Left lung (tissue), 14 donors: ENCODE measurements at regions of chr5 and their contacts with region 1.

Region 1: DNA sequence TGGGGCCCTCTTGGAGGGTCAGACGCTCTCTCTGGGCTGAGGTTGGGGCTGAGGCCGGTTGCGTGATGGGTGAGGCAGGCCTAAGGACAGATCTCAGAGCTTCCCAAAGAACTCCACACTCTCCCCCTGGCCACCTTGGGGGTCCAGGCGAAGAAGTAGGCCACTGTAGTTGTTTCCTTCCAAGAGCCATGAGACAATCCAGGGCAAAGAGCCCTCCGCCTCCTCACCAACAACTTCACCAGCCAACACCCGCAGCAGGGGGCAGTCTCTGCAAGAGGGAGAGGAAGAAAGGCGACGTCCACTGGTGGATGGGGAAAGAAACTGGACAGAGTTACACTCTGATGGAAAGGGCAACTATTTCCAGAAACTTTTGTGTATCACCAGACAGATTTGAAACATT is 10.7 kb downstream of the SLC35A4 start:
- DNase-seq: peak in 1 of 4 donors; percentile 82
- ATAC-seq: peak; percentile 85
- H3K4me3 ChIP-seq: no peak overlapping the region
- H3K27ac ChIP-seq: no peak overlapping the region
- H3K4me1 ChIP-seq: peaks cover 0 to 36% of the 10 kb centered on the region in 2 donors
- H3K27me3 ChIP-seq: no peaks in the 10 kb centered on the region
- CTCF ChIP-seq: peak; percentile 38 to 67

Region 2: DNA sequence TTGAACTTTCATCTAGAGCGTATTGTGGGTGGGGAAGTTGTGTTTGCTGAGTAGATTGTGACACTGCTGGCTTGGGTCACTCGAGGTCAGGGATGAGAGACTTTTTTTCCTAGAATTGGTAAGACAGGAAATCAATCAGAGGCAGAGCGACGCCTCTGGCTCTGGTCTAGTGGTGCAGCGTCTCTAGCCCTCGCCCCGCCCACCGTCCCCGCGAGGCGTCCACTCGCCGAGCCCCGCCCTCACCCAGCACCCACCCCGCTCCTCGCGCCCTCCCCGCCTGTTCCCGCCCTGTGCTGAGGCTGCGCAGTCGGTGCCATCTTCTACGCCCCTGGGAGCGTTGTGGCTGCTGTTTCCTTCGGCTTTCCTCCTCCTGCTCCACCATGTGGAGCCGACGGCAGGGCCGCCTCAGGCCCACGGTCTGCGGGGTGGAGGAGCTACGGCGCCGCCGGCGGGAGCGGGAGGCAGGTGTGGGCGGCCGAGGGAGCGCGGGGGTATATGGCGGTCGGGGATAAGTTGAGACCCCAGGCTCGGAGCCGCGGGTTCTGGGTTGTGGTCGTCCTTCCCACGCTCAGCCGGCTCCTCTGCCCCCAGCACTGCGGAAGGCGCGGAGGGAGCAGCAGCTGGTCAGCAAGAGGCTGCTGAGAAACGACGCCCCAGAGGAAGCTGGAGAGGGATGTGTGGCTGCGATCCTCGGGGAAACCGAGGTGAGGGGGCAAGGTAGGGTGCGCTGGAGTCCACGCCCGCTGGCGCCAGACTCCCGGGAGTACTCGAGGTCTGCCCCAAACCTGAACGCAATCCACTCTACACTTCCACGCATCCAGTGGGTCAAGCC is 64.1 kb after region 1 on chr5 and contains the start of gene TMCO6:
- intact Hi-C with region 1: loop called in 1 of 2 experiments (anchors 10 kb)
- DNase-seq: peak; percentile 92 to 100 (median 98)
- ATAC-seq: peak; percentile 99
- H3K4me3 ChIP-seq: peak within 1 kb of the TSS; percentile 74 to 86
- H3K27ac ChIP-seq: peak within 1 kb of the TSS; percentile 83 to 92
- H3K4me1 ChIP-seq: peaks cover 8 to 42% of the 10 kb centered on the region in 2 donors
- H3K27me3 ChIP-seq: no peaks in the 10 kb centered on the region
- CTCF ChIP-seq: peak; percentile 68 to 78
- polyA plus RNA-seq, gene TMCO6: 18.7 to 23.1 (median 19.7) TPM